ENCODE measurements at regions of chr6 and their contacts with region 1.

Region 1: GRCh38 chr6:84284428-84285049 is 57.1 kb upstream of the CEP162 start:
- DNase-seq: peak; percentile 50
- H3K4me3 ChIP-seq: peak overlapping the region in 1 of 2 experiments; percentile 37; a peak in 1 of 4 replicates
- H3K27ac ChIP-seq: no peak overlapping the region
- H3K4me1 ChIP-seq: no peaks in the 10 kb centered on the region; a peak in 1 of 4 replicates
- H3K27me3 ChIP-seq: no peaks in the 10 kb centered on the region
- CTCF ChIP-seq: peak; percentile 55
- EP300 ChIP-seq: no peak
- RAD21 ChIP-seq: peak; percentile 84

Region 2: GRCh38 chr6:84304881-84305280 is 20.3 kb after region 1 on chr6:
- CTCF ChIA-PET with region 1: interaction called, 11 read pairs
- POLR2A ChIA-PET with region 1: no interaction called
- DNase-seq: peak; percentile 35
- H3K4me3 ChIP-seq: no peak overlapping the region
- H3K27ac ChIP-seq: peak overlapping the region in 1 of 2 experiments; percentile 72; a peak in 2 of 4 replicates
- H3K4me1 ChIP-seq: peaks cover 0 to 3% of the 10 kb centered on the region in 2 experiments; a peak in 2 of 4 replicates
- H3K27me3 ChIP-seq: no peaks in the 10 kb centered on the region
- CTCF ChIP-seq: no peak
- EP300 ChIP-seq: peak in 1 of 2 experiments; percentile 34; a peak in 1 of 4 replicates
- RAD21 ChIP-seq: no peak; the same call in 1 of the 2 replicates

Region 3: DNA sequence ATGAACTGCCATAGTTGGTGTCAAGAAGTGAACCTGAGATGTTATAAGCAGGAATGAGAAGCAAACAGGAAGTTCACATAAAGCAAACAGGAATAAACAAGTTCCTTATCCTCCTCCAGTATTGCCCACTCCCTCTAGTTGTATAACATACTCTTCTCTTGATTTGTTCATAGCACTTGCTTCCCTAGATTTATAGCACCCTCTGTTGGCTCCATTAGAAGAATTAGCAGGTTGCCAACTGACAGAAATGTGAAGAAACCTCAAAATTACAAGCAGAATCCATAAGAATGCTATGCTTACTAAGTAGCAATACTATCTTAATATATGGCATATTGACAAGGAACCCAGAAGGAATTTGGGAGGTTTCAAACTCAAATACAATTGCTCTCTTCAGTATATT is 284.4 kb after region 1 on chr6:
- CTCF ChIA-PET with region 1: interaction called, 15 read pairs
- POLR2A ChIA-PET with region 1: no interaction called
- DNase-seq: no peak
- H3K4me3 ChIP-seq: no peak overlapping the region
- H3K27ac ChIP-seq: no peak overlapping the region
- H3K4me1 ChIP-seq: no peaks in the 10 kb centered on the region
- H3K27me3 ChIP-seq: no peaks in the 10 kb centered on the region
- CTCF ChIP-seq: peak; percentile 39
- EP300 ChIP-seq: no peak
- RAD21 ChIP-seq: peak; percentile 70